ENCODE measurements at regions of chr11 and their contacts with region 1.

Region 1: GRCh38 chr11:95764267-95764898 is 25.2 kb downstream of the FAM76B start:
- DNase-seq: no peak
- H3K4me3 ChIP-seq: no peak overlapping the region
- H3K27ac ChIP-seq: no peak overlapping the region
- H3K4me1 ChIP-seq: peaks cover 0 to 11% of the 10 kb centered on the region in 2 donors
- H3K27me3 ChIP-seq: no peaks in the 10 kb centered on the region
- CTCF ChIP-seq: peak; percentile 44 to 83 (median 62)
- POLR2A ChIP-seq: no peak

Region 2: DNA sequence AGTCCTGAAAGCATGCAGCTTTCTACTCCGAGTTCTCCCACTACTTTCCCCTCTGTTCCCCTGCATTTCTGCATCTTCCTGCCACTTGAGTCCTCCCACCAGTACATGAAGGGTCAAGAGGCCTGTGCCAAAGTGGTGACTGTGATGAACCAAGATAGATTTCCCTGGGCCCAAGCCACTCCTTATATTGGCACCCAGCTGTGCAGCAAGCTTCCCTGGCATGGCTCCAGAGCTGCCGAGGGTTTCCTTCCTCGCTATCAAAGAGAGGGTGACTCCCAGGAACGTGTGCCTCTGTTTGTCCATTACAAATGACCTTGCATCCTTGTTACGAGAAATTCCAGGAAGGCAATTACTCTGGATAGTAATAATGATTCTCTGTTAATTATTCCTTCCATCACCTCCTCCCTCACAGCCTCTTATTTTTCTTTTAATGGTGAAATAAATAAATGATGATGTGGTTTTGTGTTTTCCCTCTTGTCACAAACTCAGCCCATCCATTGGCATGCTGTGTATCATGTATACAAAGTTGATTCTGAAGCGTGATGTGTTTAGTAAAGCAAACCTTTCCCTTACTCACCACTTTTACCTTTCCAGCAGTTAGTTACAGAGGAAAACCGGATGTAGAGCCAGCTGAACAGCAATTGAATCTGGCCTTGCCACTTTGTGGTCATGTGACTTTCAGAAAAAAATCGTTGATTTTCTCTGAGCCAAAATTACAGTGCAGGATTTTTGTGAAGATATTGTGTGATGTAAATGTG is 689.4 kb before region 1 on chr11:
- intact Hi-C with region 1: loop called (anchors 5 kb)
- DNase-seq: peak; percentile 87 to 91
- H3K4me3 ChIP-seq: no peak overlapping the region
- H3K27ac ChIP-seq: peak overlapping the region; percentile 77 to 89 (median 79)
- H3K4me1 ChIP-seq: peaks cover 32 to 36% of the 10 kb centered on the region in 2 donors
- H3K27me3 ChIP-seq: no peaks in the 10 kb centered on the region
- CTCF ChIP-seq: no peak
- POLR2A ChIP-seq: no peak

Region 3: DNA sequence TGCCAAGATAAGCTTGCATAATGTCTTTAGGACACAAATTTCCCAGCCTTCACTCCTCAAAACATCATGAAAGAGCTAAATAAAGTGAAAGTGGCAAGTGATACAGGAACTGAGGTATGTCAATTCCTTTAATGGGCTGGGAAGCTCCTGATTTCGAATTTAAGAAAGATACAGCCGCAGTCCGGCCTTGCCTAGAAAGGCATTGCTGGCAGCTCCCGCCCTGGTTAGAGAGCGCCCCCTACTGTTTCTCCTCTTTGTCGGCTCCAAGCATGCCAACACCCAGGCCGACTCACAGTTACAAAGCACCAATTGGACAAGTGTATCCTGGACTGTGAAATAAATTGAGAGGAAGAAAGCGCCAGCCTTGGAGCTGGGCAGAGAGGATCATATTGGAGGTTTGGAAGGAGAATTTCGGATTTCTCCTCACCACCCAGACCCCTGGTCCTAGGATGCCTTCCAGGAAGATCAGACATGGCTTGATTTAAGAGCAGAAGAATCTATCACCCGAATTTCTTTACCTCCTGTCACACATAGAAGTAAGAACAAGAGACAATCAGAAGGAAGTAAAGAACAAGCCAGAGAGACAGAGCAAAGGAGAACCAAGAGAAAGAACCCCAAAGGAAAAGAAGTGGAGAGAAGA is 58.8 kb before region 1 on chr11:
- intact Hi-C with region 1: loop called (anchors 10 kb)
- DNase-seq: peak; percentile 88 to 91
- H3K4me3 ChIP-seq: no peak overlapping the region
- H3K27ac ChIP-seq: peak overlapping the region; percentile 4 to 66 (median 49)
- H3K4me1 ChIP-seq: peaks cover 0 to 12% of the 10 kb centered on the region in 2 donors
- H3K27me3 ChIP-seq: no peaks in the 10 kb centered on the region
- CTCF ChIP-seq: peak; percentile 57 to 96 (median 92)
- POLR2A ChIP-seq: no peak

Region 4: DNA sequence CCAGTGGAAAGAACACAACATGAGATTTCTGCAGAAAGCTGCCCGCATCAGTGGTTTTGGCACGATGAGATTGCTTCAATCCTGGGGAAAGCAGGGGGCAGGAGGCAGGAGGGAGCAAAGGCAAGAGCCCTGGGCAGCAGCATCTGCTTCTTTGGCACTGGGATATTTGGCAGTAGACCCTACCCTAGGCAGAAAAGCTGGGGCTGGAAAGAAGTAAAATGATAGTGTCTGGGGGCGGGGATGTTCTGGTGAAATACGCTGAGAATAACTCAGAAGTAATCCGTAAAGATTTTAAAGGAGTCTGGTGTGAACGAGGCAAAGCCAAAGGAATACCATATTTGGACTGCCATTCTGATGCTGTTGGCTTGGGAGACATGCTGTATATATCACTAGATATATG is 36.8 kb before region 1 on chr11:
- intact Hi-C with region 1: no loop called
- DNase-seq: no peak
- H3K4me3 ChIP-seq: no peak overlapping the region
- H3K27ac ChIP-seq: no peak overlapping the region
- H3K4me1 ChIP-seq: no peaks in the 10 kb centered on the region
- H3K27me3 ChIP-seq: no peaks in the 10 kb centered on the region
- CTCF ChIP-seq: no peak
- POLR2A ChIP-seq: no peak